Caco-2 (cell line): ENCODE measurements at regions of chr10 and their contacts with region 1.

Region 1: GRCh38 chr10:6088721-6089390 is at the start of gene RBM17:
- DNase-seq: peak; percentile 97 to 99
- H3K4me3 ChIP-seq: peak within 1 kb of the TSS; percentile 97
- H3K4me3 Mint-ChIP-seq: peak within 1 kb of the TSS; percentile 86
- H3K27ac Mint-ChIP-seq: peak within 1 kb of the TSS; percentile 80
- H3K4me1 ChIP-seq: no peaks in the 10 kb centered on the region
- H3K4me1 Mint-ChIP-seq: peaks cover 41% of the 10 kb centered on the region
- H3K27me3 ChIP-seq: no peaks in the 10 kb centered on the region; the same call in 1 of the 2 replicates
- H3K27me3 Mint-ChIP-seq: peaks cover 14% of the 10 kb centered on the region
- CTCF ChIP-seq: peak; percentile 100
- total RNA-seq, gene RBM17: 286 and 290 TPM in 2 replicates

Region 2: GRCh38 chr10:5948999-5949759 is 139.7 kb before region 1 on chr10:
- CTCF ChIA-PET with region 1: interaction called, 3 read pairs
- POLR2A ChIA-PET with region 1: no interaction called
- intact Hi-C with region 1: loop called (anchors 1 kb)
- DNase-seq: peak; percentile 74 to 75
- H3K4me3 ChIP-seq: no peak overlapping the region
- H3K4me3 Mint-ChIP-seq: no peak overlapping the region
- H3K27ac Mint-ChIP-seq: no peak overlapping the region
- H3K4me1 ChIP-seq: peaks cover 3% of the 10 kb centered on the region; the same call in 1 of the 2 replicates
- H3K4me1 Mint-ChIP-seq: peaks cover 11% of the 10 kb centered on the region
- H3K27me3 ChIP-seq: no peaks in the 10 kb centered on the region
- H3K27me3 Mint-ChIP-seq: no peaks in the 10 kb centered on the region
- CTCF ChIP-seq: peak; percentile 41 to 82

Region 3: DNA sequence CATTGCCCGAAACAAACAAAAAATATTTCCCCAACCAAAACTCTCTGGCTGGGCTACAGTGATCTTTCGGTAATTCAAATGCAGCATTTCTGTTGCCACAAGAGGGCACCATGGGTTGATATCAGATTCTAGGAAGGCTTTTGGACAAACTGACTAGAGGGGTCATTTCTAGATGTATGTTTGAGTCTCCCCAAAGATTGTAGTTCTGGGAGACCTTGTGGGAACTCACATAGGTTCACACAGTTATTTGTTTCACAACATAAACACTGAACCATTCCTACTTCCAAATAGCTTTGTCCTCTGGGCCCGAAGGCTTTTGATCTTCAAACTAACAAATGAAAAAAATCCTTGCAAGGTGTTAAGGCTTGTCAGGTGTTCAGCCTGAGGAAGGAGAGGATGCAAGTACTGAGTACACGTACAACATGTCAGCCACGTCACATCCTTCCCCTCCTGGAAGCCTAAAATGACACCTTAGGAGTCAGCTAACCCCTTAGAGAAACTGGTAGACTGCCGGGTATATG is 74.6 kb before region 1 on chr10:
- CTCF ChIA-PET with region 1: no interaction called
- POLR2A ChIA-PET with region 1: no interaction called
- intact Hi-C with region 1: loop called (anchors 1 kb)
- DNase-seq: peak in 1 of 2 experiments; percentile 67
- H3K4me3 ChIP-seq: no peak overlapping the region
- H3K4me3 Mint-ChIP-seq: no peak overlapping the region
- H3K27ac Mint-ChIP-seq: no peak overlapping the region
- H3K4me1 ChIP-seq: no peaks in the 10 kb centered on the region
- H3K4me1 Mint-ChIP-seq: no peaks in the 10 kb centered on the region
- H3K27me3 ChIP-seq: no peaks in the 10 kb centered on the region; the same call in 1 of the 2 replicates
- H3K27me3 Mint-ChIP-seq: peaks cover 9% of the 10 kb centered on the region
- CTCF ChIP-seq: peak; percentile 82 to 85

Region 4: DNA sequence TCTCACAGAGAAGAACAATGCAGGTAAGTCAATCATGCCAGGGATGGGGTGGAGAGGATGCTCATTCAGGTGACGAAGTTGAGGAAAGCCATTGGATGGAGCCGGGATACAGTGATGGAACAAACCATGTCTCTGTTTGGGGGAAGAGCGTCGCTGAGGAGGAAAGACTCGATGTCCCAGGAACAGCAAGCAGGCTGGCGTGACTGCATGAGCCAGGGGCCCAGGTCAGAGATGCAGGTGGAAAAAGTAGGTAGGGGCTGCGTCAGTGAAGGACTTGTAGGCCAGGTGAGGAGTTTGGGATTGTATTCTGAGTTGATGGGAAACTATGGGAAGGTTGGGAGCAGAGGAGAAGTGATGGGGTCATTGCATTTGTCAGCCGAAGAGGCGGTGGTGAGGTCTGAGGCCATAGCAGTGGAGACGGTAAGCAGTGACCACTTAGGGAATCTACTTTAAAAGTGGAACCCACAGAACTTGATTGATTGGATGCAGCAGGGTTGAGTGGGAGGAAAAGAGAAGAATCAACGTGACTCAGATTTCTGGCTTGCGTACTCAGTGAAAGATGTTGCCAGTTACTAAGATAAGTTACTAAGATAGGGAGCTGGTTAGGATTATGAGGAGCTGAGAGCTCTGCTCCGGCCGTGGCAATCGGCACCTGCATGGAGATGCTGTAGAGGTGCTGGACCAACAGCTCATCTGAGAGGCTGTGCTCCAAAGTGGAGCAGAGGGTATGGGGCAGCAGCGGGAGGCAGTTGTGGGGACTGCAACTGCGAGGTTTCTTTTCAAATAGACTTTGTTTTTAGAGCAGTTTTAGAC is 14.2 kb before region 1 on chr10:
- CTCF ChIA-PET with region 1: interaction called, 12 read pairs
- POLR2A ChIA-PET with region 1: no interaction called
- intact Hi-C with region 1: no loop called
- DNase-seq: no peak
- H3K4me3 ChIP-seq: no peak overlapping the region
- H3K4me3 Mint-ChIP-seq: no peak overlapping the region
- H3K27ac Mint-ChIP-seq: no peak overlapping the region
- H3K4me1 ChIP-seq: no peaks in the 10 kb centered on the region
- H3K4me1 Mint-ChIP-seq: no peaks in the 10 kb centered on the region
- H3K27me3 ChIP-seq: no peaks in the 10 kb centered on the region; the same call in 1 of the 2 replicates
- H3K27me3 Mint-ChIP-seq: peaks cover 35% of the 10 kb centered on the region
- CTCF ChIP-seq: no peak

Region 5: GRCh38 chr10:6108603-6109443 is 20.0 kb after region 1 on chr10:
- CTCF ChIA-PET with region 1: no interaction called
- POLR2A ChIA-PET with region 1: no interaction called
- intact Hi-C with region 1: loop called (anchors 2 kb)
- DNase-seq: peak in 1 of 2 experiments; percentile 47
- H3K4me3 ChIP-seq: no peak overlapping the region
- H3K4me3 Mint-ChIP-seq: no peak overlapping the region
- H3K27ac Mint-ChIP-seq: no peak overlapping the region
- H3K4me1 ChIP-seq: no peaks in the 10 kb centered on the region
- H3K4me1 Mint-ChIP-seq: no peaks in the 10 kb centered on the region
- H3K27me3 ChIP-seq: no peaks in the 10 kb centered on the region
- H3K27me3 Mint-ChIP-seq: no peaks in the 10 kb centered on the region
- CTCF ChIP-seq: peak; percentile 61 to 85

Region 6: DNA sequence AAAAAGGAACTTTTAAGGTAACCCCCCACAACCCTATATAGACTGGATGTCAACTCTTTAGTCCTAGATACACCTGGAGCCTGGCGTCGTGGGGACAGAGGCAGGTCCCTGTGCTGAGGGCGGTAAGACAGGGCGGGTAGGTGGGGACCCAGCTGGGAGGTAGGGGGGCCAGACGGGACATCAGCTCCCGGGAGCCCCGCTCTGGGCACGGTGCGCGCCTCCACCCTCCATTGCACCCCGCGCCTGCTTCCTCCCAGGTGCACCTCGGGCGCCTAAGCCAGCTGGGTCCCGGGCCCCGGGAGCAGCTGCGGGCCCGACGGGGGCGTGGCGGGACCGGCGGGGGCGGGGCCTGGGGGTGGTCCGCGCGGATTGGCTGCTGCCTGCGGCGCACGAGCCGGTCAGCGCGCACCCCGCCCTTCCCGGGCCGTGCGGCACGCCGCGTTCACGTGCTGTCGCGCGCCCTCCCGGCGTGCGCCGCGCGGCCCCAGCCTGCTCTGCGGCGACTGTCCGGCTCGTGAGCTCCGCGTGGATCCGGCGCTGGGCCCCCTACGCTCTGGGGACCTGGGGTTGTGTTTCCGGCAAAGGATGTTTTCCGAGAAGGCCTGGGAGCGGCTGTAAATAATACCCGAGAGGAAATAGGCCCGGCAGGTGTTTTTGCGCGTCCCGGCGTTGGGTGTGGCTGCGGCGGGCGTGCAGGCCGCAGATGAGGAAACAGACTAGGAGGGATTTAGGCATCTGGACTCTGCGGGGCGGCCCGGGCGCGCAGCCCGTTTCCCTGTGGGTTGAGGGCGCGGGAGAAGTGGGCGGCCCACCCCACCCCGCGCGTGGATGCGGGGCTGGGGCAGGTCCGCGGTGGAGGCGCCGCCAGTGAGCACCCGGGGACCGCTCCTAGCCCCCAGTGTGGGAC is 74.8 kb after region 1 on chr10:
- CTCF ChIA-PET with region 1: interaction called, 3 read pairs
- POLR2A ChIA-PET with region 1: no interaction called
- intact Hi-C with region 1: loop called (anchors 5 kb)
- DNase-seq: peak; percentile 90 to 98
- H3K4me3 ChIP-seq: peak overlapping the region; percentile 97
- H3K4me3 Mint-ChIP-seq: peak overlapping the region; percentile 88
- H3K27ac Mint-ChIP-seq: peak overlapping the region; percentile 98
- H3K4me1 ChIP-seq: peaks cover 20% of the 10 kb centered on the region
- H3K4me1 Mint-ChIP-seq: peaks cover 43% of the 10 kb centered on the region
- H3K27me3 ChIP-seq: no peaks in the 10 kb centered on the region
- H3K27me3 Mint-ChIP-seq: no peaks in the 10 kb centered on the region
- CTCF ChIP-seq: no peak

Region 7: DNA sequence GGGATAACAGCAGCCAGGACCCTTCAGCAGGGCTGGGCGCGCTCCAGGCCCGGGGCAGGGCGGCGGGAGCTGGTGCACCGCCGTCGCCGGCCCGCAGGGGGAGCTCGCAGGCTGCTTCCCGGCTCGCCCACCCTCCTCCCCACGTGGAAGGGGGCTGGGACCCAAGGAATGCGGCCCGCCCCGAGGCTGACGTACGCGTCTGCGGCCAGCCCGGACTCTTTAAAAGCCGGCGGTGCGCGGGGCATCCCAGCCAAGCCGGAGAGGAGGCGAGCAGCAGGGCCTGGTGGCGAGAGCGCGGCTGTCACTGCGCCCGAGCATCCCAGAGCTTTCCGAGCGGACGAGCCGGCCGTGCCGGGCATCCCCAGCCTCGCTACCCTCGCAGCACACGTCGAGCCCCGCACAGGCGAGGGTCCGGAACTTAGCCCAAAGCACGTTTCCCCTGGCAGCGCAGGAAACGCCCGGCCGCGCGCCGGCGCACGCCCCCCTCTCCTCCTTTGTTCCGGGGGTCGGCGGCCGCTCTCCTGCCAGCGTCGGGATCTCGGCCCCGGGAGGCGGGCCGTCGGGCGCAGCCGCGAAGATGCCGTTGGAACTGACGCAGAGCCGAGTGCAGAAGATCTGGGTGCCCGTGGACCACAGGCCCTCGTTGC is 114.0 kb after region 1 on chr10 and contains the start of gene PFKFB3:
- CTCF ChIA-PET with region 1: interaction called, 6 read pairs
- POLR2A ChIA-PET with region 1: interaction called, 3 read pairs
- intact Hi-C with region 1: loop called (anchors 5 kb)
- DNase-seq: peak; percentile 96 to 99
- H3K4me3 ChIP-seq: peak within 1 kb of the TSS; percentile 78
- H3K4me3 Mint-ChIP-seq: peak within 1 kb of the TSS; percentile 92
- H3K27ac Mint-ChIP-seq: peak within 1 kb of the TSS; percentile 78
- H3K4me1 ChIP-seq: peaks cover 13% of the 10 kb centered on the region
- H3K4me1 Mint-ChIP-seq: peaks cover 8% of the 10 kb centered on the region
- H3K27me3 ChIP-seq: no peaks in the 10 kb centered on the region
- H3K27me3 Mint-ChIP-seq: no peaks in the 10 kb centered on the region
- CTCF ChIP-seq: peak; percentile 88 to 99
- total RNA-seq, gene PFKFB3: 33.0 and 35.4 TPM in 2 replicates

Region 8: GRCh38 chr10:6394084-6394483 is 305.2 kb after region 1 on chr10:
- CTCF ChIA-PET with region 1: no interaction called
- POLR2A ChIA-PET with region 1: no interaction called
- intact Hi-C with region 1: no loop called
- DNase-seq: no peak
- H3K4me3 ChIP-seq: no peak overlapping the region
- H3K4me3 Mint-ChIP-seq: no peak overlapping the region
- H3K27ac Mint-ChIP-seq: no peak overlapping the region
- H3K4me1 ChIP-seq: 0 out of 2 replicates have a peak, but pooled peaks cover 4% of the 10 kb centered on the region
- H3K4me1 Mint-ChIP-seq: no peaks in the 10 kb centered on the region
- H3K27me3 ChIP-seq: no peaks in the 10 kb centered on the region
- H3K27me3 Mint-ChIP-seq: no peaks in the 10 kb centered on the region
- CTCF ChIP-seq: no peak